ENCODE measurements at regions of chr6 and their contacts with region 1.

Region 1: GRCh38 chr6:26216356-26216885 is 129.2 kb downstream of the HFE start:
- DNase-seq: peak; percentile 34 to 95 (median 86)
- ATAC-seq: peak; percentile 81 to 84
- H3K4me3 Mint-ChIP-seq: no peak overlapping the region
- H3K27ac Mint-ChIP-seq: no peak overlapping the region
- H3K4me1 Mint-ChIP-seq: peaks cover 0 to 12% (median 7%) of the 10 kb centered on the region in 4 donors
- H3K27me3 Mint-ChIP-seq: no peaks in the 10 kb centered on the region

Region 2: DNA sequence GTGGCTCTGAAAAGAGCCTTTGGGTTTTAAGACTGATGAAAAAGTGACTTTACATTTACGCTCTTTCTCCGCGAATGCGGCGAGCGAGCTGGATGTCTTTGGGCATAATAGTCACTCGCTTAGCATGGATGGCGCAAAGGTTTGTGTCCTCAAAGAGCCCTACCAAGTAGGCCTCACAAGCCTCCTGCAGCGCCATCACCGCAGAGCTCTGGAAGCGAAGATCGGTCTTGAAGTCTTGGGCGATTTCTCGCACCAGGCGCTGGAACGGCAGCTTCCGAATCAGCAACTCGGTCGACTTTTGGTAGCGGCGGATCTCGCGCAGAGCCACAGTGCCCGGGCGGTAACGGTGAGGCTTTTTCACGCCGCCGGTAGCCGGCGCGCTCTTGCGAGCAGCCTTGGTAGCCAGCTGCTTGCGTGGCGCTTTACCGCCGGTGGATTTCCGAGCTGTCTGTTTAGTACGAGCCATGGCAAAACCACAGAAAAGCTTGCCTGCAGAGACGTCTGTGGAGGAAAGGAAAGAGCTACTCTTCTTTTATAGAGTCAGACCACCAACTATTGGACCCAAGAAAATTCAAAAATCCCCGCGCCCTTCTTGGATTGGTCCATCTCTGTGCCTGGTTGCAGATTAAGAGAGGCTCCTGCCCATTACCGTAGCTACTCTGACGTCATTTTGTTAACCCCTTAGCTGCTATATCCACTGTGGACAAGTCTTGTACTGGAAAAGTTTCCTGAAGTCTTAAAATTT is 184.7 kb before region 1 on chr6:
- POLR2A ChIA-PET with region 1: interaction called, 28 read pairs
- DNase-seq: peak; percentile 71 to 96 (median 91)
- ATAC-seq: peak; percentile 67 to 71
- H3K4me3 Mint-ChIP-seq: peak overlapping the region; percentile 94 to 97 (median 95)
- H3K27ac Mint-ChIP-seq: peak overlapping the region; percentile 93 to 99 (median 96)
- H3K4me1 Mint-ChIP-seq: peaks cover 11 to 52% (median 41%) of the 10 kb centered on the region in 4 donors
- H3K27me3 Mint-ChIP-seq: peaks cover 0 to 2% (median 0%) of the 10 kb centered on the region in 5 donors

Region 3: GRCh38 chr6:26175428-26176181 is 40.8 kb before region 1 on chr6:
- POLR2A ChIA-PET with region 1: interaction called, 72 read pairs
- DNase-seq: peak in 9 of 10 donors; percentile 21 to 76 (median 59)
- ATAC-seq: no peak
- H3K4me3 Mint-ChIP-seq: peak overlapping the region in 5 of 10 donors; percentile 33 to 62 (median 51)
- H3K27ac Mint-ChIP-seq: peak overlapping the region; percentile 11 to 82 (median 59)
- H3K4me1 Mint-ChIP-seq: peaks cover 15 to 43% (median 34%) of the 10 kb centered on the region in 4 donors
- H3K27me3 Mint-ChIP-seq: no peaks in the 10 kb centered on the region

Region 4: GRCh38 chr6:26183581-26184366 is 32.6 kb before region 1 on chr6:
- POLR2A ChIA-PET with region 1: interaction called, 97 read pairs
- DNase-seq: peak; percentile 22 to 82 (median 58)
- ATAC-seq: peak; percentile 92 to 94
- H3K4me3 Mint-ChIP-seq: peak overlapping the region; percentile 93 to 100 (median 98)
- H3K27ac Mint-ChIP-seq: peak overlapping the region; percentile 70 to 98 (median 95)
- H3K4me1 Mint-ChIP-seq: peaks cover 27 to 48% (median 46%) of the 10 kb centered on the region in 4 donors
- H3K27me3 Mint-ChIP-seq: no peaks in the 10 kb centered on the region

Region 5: GRCh38 chr6:26204332-26205165 is 11.9 kb before region 1 on chr6:
- POLR2A ChIA-PET with region 1: interaction called, 603 read pairs
- DNase-seq: peak; percentile 69 to 97 (median 88)
- ATAC-seq: peak; percentile 68 to 71
- H3K4me3 Mint-ChIP-seq: no peak overlapping the region
- H3K27ac Mint-ChIP-seq: no peak overlapping the region
- H3K4me1 Mint-ChIP-seq: peaks cover 14 to 36% (median 26%) of the 10 kb centered on the region in 4 donors
- H3K27me3 Mint-ChIP-seq: peaks cover 0 to 4% (median 0%) of the 10 kb centered on the region in 5 donors

Region 6: GRCh38 chr6:26240154-26241032 is 24.0 kb after region 1 on chr6:
- POLR2A ChIA-PET with region 1: interaction called, 669 read pairs
- DNase-seq: peak; percentile 39 to 90 (median 80)
- ATAC-seq: peak; percentile 82 to 85
- H3K4me3 Mint-ChIP-seq: peak overlapping the region; percentile 82 to 95 (median 88)
- H3K27ac Mint-ChIP-seq: peak overlapping the region; percentile 92 to 99 (median 98)
- H3K4me1 Mint-ChIP-seq: peaks cover 9 to 25% (median 22%) of the 10 kb centered on the region in 4 donors
- H3K27me3 Mint-ChIP-seq: no peaks in the 10 kb centered on the region

Region 7: DNA sequence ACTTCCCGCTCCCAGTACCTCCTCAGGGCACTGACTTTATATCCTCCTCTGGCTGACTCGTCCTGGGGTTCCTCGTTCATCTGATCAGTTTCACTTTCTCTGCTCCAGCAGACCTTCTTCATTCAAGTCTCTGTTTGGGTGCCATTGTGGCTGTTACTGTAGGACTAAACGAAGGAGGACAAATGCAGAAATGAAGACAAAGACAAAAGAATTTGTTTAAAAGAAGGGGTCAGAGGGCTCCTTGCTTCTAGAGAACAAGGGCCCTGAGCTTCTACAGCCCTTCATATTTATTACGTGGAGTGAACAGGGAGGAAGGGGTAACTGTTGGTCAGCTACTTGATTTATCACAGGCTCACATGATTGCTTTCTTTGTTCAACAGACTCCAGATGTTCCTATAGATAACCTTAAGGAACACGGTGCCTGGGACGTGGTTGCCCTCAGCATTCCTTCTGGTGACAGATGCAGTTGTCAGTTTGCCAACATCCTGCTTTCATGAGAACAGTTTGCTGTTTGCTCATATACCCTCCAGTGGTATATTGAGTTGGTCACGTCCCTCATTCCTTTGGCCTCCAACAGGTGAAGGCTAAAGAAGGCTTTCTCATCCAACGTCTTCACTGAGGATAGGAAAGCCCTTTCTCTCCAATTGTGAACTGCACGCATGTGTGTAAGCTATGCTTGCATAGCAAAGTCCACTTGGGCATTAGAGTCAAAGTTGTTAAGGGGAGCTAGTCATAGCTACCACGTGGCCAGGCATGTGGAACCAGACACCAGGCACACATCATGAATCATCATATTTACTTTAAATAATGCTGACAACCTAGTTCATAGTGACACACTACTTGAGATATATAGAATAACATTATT is 79.5 kb after region 1 on chr6:
- POLR2A ChIA-PET with region 1: no interaction called
- DNase-seq: no peak
- ATAC-seq: no peak
- H3K4me3 Mint-ChIP-seq: peak overlapping the region in 5 of 10 donors; percentile 2 to 46 (median 30)
- H3K27ac Mint-ChIP-seq: peak overlapping the region in 1 of 10 donors; percentile 19
- H3K4me1 Mint-ChIP-seq: peaks cover 0 to 6% (median 3%) of the 10 kb centered on the region in 4 donors
- H3K27me3 Mint-ChIP-seq: no peaks in the 10 kb centered on the region

Region 8: DNA sequence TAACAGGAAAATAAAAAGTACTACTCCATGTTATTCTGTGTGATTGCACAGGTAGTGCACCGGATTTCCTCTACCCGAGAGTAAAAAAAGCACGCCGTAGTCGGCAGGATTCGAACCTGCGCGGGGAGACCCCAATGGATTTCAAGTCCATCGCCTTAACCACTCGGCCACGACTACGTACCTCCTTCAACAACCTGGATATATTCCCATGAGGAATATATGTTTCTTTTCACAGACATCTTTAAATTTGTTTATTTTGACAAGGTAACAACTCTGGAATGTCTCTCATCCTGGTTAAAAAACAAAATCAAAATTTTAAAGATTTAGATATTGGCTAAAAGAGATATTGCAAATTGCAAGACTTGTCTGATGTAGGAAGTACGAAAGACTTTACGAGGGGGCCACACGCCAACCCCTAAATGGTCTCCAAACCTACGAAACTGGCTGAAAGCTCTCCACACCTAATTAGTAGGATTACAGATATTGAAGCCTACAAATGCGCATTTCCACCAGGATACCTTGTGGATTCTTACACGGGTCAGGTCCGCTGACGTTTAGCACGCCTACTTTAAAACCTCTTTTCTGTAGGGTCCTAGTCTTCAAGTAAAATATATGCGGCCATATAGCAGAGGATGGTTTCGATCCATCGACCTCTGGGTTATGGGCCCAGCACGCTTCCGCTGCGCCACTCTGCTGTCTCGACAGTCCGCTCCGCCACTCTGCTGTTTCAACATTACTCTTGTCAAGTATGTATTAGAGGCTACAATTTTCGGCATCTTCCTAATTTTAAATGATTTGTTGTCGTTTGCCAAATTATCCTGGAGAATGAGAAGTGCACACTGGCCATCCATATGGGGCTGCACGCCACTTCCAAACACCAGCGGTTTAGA is 96.3 kb after region 1 on chr6:
- POLR2A ChIA-PET with region 1: interaction called, 10 read pairs
- DNase-seq: peak; percentile 65 to 94 (median 86)
- ATAC-seq: peak; percentile 71 to 81
- H3K4me3 Mint-ChIP-seq: peak overlapping the region; percentile 92 to 97 (median 94)
- H3K27ac Mint-ChIP-seq: peak overlapping the region; percentile 74 to 100 (median 94)
- H3K4me1 Mint-ChIP-seq: peaks cover 20 to 47% (median 41%) of the 10 kb centered on the region in 4 donors
- H3K27me3 Mint-ChIP-seq: peaks cover 0 to 6% (median 0%) of the 10 kb centered on the region in 5 donors